K562 (cell line): ENCODE measurements at regions of chr5 and their contacts with region 1.

Region 1: GRCh38 chr5:110738812-110739651 is at the start of gene SLC25A46:
- DNase-seq: peak; percentile 75 to 93 (median 78)
- ATAC-seq: peak; percentile 95
- H3K4me3 ChIP-seq: peak within 1 kb of the TSS; percentile 92
- H3K27ac ChIP-seq: peak within 1 kb of the TSS; percentile 79
- H3K4me1 ChIP-seq: 0 out of 5 replicates have a peak, but pooled peaks cover 2 to 6% of the 10 kb centered on the region in 2 experiments
- H3K27me3 ChIP-seq: no peaks in the 10 kb centered on the region
- CTCF ChIP-seq: no peak
- EP300 ChIP-seq: no peak
- POLR2A ChIP-seq: peak; percentile 92
- RAD21 ChIP-seq: no peak
- polyA plus RNA-seq, gene SLC25A46: 7.8 to 13.1 TPM

Region 2: GRCh38 chr5:110880413-110880812 is 141.4 kb after region 1 on chr5:
- CTCF ChIA-PET with region 1: no interaction called
- POLR2A ChIA-PET with region 1: no interaction called
- in situ Hi-C with region 1: no loop called
- intact Hi-C with region 1: no loop called
- DNase-seq: no peak
- ATAC-seq: no peak
- H3K4me3 ChIP-seq: no peak overlapping the region
- H3K27ac ChIP-seq: no peak overlapping the region
- H3K4me1 ChIP-seq: no peaks in the 10 kb centered on the region
- H3K27me3 ChIP-seq: no peaks in the 10 kb centered on the region
- CTCF ChIP-seq: no peak
- EP300 ChIP-seq: no peak
- POLR2A ChIP-seq: no peak
- RAD21 ChIP-seq: no peak

Region 3: DNA sequence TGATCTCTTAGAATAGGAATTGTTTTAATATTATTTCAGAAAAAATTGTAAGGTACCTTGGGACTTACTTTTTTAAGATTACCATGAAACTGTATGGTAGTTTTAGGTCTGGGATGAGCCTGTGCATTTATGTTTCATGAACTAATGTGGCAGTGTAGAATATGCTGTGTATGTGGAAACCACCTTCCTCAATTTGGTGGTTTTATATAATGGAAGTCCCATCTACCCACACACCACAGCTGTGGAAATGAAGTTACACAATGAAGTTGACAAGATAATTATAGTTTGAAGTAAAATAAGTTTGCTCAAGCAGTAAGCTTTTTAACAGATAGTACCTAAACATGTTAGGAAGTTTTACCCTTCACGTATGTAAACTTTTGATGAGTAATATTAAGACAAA is 377.5 kb after region 1 on chr5:
- CTCF ChIA-PET with region 1: no interaction called
- POLR2A ChIA-PET with region 1: no interaction called
- in situ Hi-C with region 1: loop called (anchors 25 kb)
- intact Hi-C with region 1: no loop called
- DNase-seq: no peak
- ATAC-seq: no peak
- H3K4me3 ChIP-seq: no peak overlapping the region
- H3K27ac ChIP-seq: no peak overlapping the region
- H3K4me1 ChIP-seq: no peaks in the 10 kb centered on the region
- H3K27me3 ChIP-seq: no peaks in the 10 kb centered on the region
- CTCF ChIP-seq: no peak
- EP300 ChIP-seq: no peak
- POLR2A ChIP-seq: no peak
- RAD21 ChIP-seq: no peak